ENCODE measurements at regions of chr6 and their contacts with region 1.

Region 1: GRCh38 chr6:108558372-108559096 is 2.2 kb upstream of the FOXO3 start:
- DNase-seq: peak; percentile 98 to 99 (median 98)
- H3K4me3 ChIP-seq: peak overlapping the region; percentile 81
- H3K27ac ChIP-seq: peak overlapping the region; percentile 97 to 99
- H3K4me1 ChIP-seq: peaks cover 3% of the 10 kb centered on the region
- H3K27me3 ChIP-seq: no peaks in the 10 kb centered on the region
- CTCF ChIP-seq: peak in 1 of 3 donors; percentile 15
- EP300 ChIP-seq: peak; percentile 53
- POLR2A ChIP-seq: peak; percentile 76

Region 2: GRCh38 chr6:108235127-108235526 is 323.4 kb before region 1 on chr6:
- intact Hi-C with region 1: no loop called
- DNase-seq: no peak
- H3K4me3 ChIP-seq: no peak overlapping the region
- H3K27ac ChIP-seq: no peak overlapping the region
- H3K4me1 ChIP-seq: no peaks in the 10 kb centered on the region
- H3K27me3 ChIP-seq: no peaks in the 10 kb centered on the region
- CTCF ChIP-seq: no peak
- EP300 ChIP-seq: no peak
- POLR2A ChIP-seq: no peak

Region 3: DNA sequence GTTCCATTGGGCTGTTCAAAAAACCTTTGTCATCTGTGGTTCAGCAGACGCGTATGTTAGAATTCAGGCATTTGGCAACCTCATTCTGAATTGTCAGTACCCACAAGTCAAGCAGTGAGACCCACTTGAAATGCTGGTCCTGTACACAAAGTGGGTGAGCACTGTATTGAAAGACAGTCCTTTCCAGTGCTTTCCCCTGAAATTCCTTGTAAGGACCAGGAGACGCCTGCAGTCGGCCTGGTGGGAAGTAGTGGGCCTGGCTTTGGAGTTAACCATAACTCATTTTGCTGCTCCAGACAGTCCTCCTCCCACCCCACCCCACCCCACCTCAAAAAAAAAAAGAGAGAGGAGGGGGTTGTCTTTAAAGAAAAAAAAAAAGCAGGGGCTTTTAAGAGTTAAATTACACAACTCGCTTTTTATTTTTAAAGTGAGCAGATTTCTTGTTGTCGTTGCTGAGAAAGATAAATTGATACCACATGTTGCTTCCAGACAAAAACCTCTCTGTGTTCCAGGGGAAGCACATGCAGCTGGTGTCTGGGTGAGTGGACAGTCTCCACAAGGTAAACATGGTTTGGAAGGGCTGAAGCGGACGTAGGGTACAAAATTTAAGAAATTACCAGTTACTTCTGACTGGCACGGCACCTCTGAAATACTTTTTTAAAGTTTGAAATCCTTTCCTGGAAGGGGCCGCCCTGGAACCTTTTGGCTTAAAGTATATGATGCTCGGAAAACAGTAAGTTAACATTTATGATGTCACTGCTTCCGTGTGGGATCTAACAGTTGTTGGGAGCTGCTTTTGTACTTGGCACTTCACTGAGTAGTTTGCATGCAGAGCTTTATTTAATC is 97.5 kb after region 1 on chr6:
- intact Hi-C with region 1: loop called in 1 of 4 experiments (anchors 5 kb)
- DNase-seq: peak in 3 of 5 donors; percentile 28 to 50 (median 38)
- H3K4me3 ChIP-seq: peak overlapping the region; percentile 23
- H3K27ac ChIP-seq: peak overlapping the region; percentile 11 to 63
- H3K4me1 ChIP-seq: peaks cover 38% of the 10 kb centered on the region
- H3K27me3 ChIP-seq: no peaks in the 10 kb centered on the region
- CTCF ChIP-seq: no peak
- EP300 ChIP-seq: no peak
- POLR2A ChIP-seq: no peak

Region 4: DNA sequence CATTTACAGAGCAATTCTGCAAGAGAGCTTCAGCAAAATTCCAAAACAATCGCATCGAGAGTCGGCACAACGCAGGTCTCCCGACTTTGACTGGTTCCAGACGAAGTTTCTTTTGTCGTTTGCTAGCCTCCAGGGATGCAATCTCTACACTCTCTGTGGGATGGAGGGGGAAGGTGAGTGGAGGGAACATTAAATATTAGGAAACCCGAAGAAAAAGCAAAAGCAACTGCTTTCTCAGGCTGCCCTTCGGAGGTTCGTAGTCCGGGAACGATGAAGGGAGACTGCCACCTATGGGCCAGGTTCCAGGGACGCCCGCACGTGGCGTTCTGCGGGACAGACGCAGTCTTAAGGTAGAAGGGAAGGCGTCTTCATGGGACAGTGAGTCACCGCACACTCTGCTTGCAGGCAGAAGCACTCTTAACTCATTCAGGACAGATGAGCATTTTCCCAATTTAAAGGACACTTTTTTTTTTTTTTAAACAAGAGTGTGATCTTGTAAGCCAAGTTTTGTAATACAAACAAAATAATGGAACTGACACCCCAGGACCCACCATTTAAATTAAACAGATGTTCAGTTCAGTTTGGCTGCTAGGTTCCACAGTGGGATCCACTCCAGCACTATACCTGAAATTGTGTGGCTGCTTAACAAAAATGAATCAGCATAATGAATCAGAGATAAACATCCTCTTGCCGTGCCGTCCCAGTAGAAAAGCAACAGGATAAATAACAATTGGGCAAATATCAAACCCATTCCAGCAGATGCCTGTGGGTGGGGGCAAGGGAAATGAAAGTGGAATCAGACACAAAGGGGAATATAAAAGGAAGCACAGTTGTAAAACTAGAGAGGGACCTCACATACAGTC is 223.9 kb after region 1 on chr6:
- intact Hi-C with region 1: loop called in 2 of 4 experiments (anchors 5 kb)
- DNase-seq: peak; percentile 83 to 88 (median 86)
- H3K4me3 ChIP-seq: peak overlapping the region; percentile 28
- H3K27ac ChIP-seq: no peak overlapping the region
- H3K4me1 ChIP-seq: no peaks in the 10 kb centered on the region
- H3K27me3 ChIP-seq: no peaks in the 10 kb centered on the region
- CTCF ChIP-seq: peak; percentile 23 to 73 (median 71)
- EP300 ChIP-seq: no peak
- POLR2A ChIP-seq: no peak

Region 5: GRCh38 chr6:108835218-108835850 is 276.8 kb after region 1 on chr6:
- intact Hi-C with region 1: loop called in 1 of 4 experiments (anchors 5 kb)
- DNase-seq: peak; percentile 74 to 89 (median 86)
- H3K4me3 ChIP-seq: no peak overlapping the region
- H3K27ac ChIP-seq: no peak overlapping the region
- H3K4me1 ChIP-seq: no peaks in the 10 kb centered on the region
- H3K27me3 ChIP-seq: no peaks in the 10 kb centered on the region
- CTCF ChIP-seq: peak; percentile 79 to 85 (median 82)
- EP300 ChIP-seq: no peak
- POLR2A ChIP-seq: no peak

Region 6: GRCh38 chr6:108947114-108947854 is 388.8 kb after region 1 on chr6:
- intact Hi-C with region 1: loop called in 1 of 4 experiments (anchors 5 kb)
- DNase-seq: peak in 1 of 5 donors; percentile 61
- H3K4me3 ChIP-seq: no peak overlapping the region
- H3K27ac ChIP-seq: peak overlapping the region; percentile 85 to 95
- H3K4me1 ChIP-seq: peaks cover 23% of the 10 kb centered on the region
- H3K27me3 ChIP-seq: no peaks in the 10 kb centered on the region
- CTCF ChIP-seq: no peak
- EP300 ChIP-seq: no peak
- POLR2A ChIP-seq: no peak

Measured in ovary (tissue), 10 donors.